Posterior vena cava (tissue), 2 donors: ENCODE measurements at regions of chr4 and their contacts with region 1.

Region 1: DNA sequence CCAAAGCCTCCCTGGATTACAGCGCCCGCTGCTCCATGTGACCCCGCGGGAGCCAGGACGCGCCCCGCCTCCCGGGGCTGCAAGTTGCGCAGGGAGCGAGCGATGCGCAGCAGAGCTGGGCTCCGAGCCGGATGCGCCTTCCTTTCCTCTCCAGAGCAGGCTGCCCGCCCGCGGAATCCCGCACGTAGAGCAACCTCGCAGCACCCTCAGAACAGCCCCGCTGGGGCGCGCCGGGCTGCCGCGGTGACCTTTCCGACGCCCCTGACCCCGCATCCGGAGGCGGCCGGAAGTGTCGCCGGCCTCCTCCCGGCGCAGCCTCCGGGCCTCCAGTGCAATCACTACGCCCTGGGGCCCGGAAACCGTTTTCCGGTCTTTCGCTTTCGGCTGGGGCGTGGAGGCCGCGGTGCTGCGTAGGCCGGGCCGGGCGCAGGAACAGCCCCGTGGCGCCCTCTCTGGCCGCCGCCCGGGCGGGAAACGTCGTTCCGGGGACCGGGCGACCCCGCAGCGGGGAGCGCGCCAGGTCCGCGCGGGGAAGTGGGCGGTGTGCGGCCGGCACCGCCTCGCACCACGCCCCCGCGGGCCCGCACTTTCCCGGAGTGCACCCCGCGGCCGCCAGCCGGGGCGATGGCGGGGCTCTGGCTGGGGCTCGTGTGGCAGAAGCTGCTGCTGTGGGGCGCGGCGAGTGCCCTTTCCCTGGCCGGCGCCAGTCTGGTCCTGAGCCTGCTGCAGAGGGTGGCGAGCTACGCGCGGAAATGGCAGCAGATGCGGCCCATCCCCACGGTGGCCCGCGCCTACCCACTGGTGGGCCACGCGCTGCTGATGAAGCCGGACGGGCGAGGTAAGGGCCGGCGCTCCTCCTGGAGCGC is at the start of gene CYP4V2:
- DNase-seq: peak; percentile 95
- total RNA-seq, gene CYP4V2: 23.0 to 27.0 TPM

Region 2: GRCh38 chr4:184375027-184375426 is 1816.4 kb before region 1 on chr4:
- intact Hi-C with region 1: loop called in 1 of 2 experiments (anchors 10 kb)
- DNase-seq: no peak

Region 3: DNA sequence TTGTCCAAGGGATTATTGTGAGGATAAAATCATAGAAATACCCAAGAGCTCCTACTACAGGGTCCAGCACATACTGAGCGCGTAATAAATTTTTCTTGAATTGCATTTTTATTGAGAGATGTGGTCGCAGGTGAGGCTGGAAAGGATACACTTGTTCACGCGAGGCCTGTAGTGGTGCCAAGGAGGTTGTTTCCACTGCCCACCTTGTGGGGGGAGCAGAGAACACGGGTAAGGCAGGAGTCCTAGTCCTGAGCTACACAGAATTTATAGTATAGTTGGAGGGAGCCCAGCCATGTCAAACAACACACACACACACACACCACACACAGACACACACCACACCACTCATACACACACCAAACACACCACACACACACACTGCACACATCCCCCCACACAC is 31.8 kb before region 1 on chr4:
- intact Hi-C with region 1: loop called in 1 of 2 experiments (anchors 1 kb)
- DNase-seq: no peak

Region 4: DNA sequence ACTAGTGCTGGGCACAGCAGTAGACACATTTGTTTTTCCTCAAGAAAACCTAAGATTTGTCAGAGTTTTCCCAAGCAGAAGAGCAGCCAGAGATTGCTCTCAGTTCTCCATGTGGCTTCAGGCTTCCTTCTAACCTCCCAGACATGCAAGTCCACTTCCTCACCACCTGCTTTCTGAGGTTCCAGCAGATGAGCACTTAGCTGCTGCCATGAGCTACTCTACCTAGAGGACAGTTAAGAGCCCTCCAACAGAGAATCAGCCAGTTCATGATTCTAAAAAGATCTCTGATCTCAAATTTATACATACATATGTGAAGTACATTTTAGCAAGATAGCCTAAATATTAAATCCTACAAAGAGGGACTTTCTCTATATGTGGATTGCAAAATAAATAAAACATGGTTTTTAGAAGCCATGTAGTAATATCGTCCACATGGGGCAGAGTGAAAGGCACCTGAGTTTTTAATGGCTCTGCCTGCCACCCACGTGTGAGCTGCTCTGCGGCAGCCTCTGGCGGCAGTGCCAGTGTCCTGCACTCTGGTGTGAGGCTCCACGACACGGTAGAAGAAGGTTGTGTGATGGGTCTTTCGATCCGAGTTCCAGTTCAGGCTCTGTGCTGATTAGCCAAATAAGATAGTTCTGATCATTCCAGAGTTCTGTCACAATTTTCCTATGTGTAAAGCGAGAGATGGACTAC is 10.2 kb after region 1 on chr4:
- intact Hi-C with region 1: no loop called
- DNase-seq: no peak